CD4-positive, alpha-beta memory T cell (primary cell): ENCODE measurements at regions of chr1 and their contacts with region 1.

Region 1: GRCh38 chr1:161915051-161915503 is 108.6 kb downstream of the OLFML2B start:
- DNase-seq: no peak
- H3K4me3 ChIP-seq: no peak overlapping the region
- H3K4me3 Mint-ChIP-seq: no peak overlapping the region
- H3K27ac ChIP-seq: no peak overlapping the region
- H3K27ac Mint-ChIP-seq: no peak overlapping the region
- H3K4me1 ChIP-seq: peaks cover 17% of the 10 kb centered on the region
- H3K4me1 Mint-ChIP-seq: peaks cover 15 to 17% (median 16%) of the 10 kb centered on the region in 4 donors
- H3K27me3 ChIP-seq: no peaks in the 10 kb centered on the region
- H3K27me3 Mint-ChIP-seq: no peaks in the 10 kb centered on the region

Region 2: DNA sequence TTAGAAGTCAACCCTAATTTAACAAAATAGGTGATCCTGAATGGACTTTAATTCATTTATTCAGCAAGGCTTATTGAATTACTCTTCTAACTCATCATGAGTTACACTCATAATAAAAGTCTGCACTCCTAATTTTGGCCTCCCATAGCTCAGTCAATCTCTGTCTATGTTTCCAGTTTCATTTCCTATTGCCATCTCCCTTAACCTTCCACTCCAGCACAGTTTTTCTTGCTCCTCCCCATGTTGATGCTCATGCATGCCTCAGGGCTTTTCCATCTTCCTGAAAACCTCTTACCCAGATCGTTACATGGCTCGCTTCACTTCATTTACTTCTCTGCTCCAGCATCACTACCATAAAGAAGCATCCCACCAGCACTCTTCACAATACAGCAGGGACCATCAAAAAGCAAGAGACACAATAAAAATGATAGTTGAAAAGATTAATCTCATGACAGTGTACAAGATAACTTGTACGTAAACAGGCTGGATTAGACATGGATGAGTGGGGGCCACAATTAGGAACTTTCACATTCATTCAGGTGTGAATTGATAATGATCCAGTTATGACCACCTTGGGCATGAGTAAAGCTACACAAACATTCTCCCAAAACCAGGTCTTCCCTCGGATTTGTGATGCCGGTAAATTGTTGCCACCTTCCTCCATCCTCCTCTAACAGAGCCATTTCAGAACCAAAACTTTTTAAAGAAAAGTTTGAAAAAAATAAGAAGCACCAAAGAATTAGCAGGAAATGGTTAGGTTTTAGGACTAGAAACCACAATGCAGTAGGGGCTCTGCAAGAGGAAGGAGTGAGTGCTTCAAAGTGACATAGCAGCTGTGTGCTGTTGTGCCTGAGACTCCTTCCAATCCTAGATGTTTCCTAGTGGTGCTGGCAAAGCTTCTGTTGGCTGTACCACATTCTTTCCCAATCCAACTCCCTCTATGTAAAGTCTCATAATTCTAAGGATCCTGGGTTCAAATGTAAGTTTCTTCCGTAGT is 18.8 kb after region 1 on chr1:
- CTCF ChIA-PET with region 1: interaction called, 3 read pairs
- POLR2A ChIA-PET with region 1: interaction called, 15 read pairs
- intact Hi-C with region 1: no loop called
- DNase-seq: peak; percentile 40 to 49 (median 47)
- H3K4me3 ChIP-seq: peak overlapping the region in 1 of 2 donors; percentile 38
- H3K4me3 Mint-ChIP-seq: peak overlapping the region; percentile 11 to 85 (median 64)
- H3K27ac ChIP-seq: peak overlapping the region; percentile 15
- H3K27ac Mint-ChIP-seq: peak overlapping the region; percentile 66 to 90 (median 80)
- H3K4me1 ChIP-seq: peaks cover 37% of the 10 kb centered on the region
- H3K4me1 Mint-ChIP-seq: peaks cover 36 to 61% (median 40%) of the 10 kb centered on the region in 4 donors
- H3K27me3 ChIP-seq: no peaks in the 10 kb centered on the region
- H3K27me3 Mint-ChIP-seq: no peaks in the 10 kb centered on the region

Region 3: GRCh38 chr1:161962091-161962887 is 47.2 kb after region 1 on chr1:
- CTCF ChIA-PET with region 1: no interaction called
- POLR2A ChIA-PET with region 1: no interaction called
- intact Hi-C with region 1: loop called (anchors 5 kb)
- DNase-seq: peak in 2 of 5 donors; percentile 10 to 15
- H3K4me3 ChIP-seq: peak overlapping the region; percentile 34 to 44
- H3K4me3 Mint-ChIP-seq: peak overlapping the region; percentile 88 to 96 (median 90)
- H3K27ac ChIP-seq: no peak overlapping the region
- H3K27ac Mint-ChIP-seq: peak overlapping the region; percentile 63 to 94 (median 88)
- H3K4me1 ChIP-seq: peaks cover 17% of the 10 kb centered on the region
- H3K4me1 Mint-ChIP-seq: peaks cover 16 to 34% (median 23%) of the 10 kb centered on the region in 4 donors
- H3K27me3 ChIP-seq: no peaks in the 10 kb centered on the region
- H3K27me3 Mint-ChIP-seq: no peaks in the 10 kb centered on the region